ENCODE measurements at regions of chr1 and their contacts with region 1.

Region 1: DNA sequence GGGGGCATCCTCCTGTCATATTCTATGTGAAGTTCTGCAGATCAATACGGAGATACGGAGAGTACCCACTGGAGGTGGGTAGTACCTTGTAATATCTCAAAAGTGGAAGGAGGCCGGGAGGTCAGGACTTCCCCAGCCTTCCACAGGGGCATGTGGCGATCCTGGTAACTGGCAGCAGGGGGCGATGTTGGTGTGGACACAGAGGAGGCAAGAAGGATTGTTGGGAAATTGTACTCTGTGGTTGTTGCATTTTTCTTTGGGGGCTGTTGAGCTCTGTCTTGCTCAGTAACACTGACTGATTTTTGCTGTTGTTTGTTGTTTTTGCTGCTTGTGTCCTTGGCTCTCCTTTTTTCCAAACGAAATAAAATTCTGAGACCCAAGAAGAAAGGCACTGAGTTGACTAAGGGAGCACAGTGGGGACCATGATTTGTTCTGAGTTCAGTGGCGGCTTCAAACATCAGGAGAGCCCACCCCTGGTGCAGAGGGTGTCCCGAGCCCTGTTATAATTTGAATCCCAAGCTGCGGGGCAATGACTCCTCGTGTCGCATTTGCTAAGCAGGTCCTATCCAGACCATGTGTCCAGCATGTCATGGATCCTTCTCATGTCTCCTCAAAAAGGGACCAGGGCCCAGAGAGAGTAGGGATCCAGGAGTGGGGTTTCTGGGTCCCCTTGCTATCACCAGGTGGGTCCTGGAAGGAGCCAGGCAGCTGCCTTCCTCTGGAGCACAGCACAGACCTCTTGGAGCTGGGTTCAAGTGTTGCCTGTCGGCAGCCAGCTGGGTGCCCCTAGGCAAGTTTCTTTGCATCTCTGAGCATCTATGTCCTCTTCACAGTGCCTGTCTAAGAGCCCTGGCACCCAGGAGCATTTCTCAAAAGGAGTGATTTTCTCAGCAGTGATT is 22.8 kb downstream of the LHX4 start:
- DNase-seq: peak; percentile 71 to 76
- ATAC-seq: peak; percentile 49 to 84; a peak in 5 of 6 replicates
- H3K4me3 ChIP-seq: no peak overlapping the region
- H3K27ac ChIP-seq: no peak overlapping the region
- H3K4me1 ChIP-seq: no peaks in the 10 kb centered on the region
- CTCF ChIP-seq: peak; percentile 87
- EP300 ChIP-seq: no peak
- POLR2A ChIP-seq: no peak
- RAD21 ChIP-seq: peak; percentile 89 to 95

Region 2: DNA sequence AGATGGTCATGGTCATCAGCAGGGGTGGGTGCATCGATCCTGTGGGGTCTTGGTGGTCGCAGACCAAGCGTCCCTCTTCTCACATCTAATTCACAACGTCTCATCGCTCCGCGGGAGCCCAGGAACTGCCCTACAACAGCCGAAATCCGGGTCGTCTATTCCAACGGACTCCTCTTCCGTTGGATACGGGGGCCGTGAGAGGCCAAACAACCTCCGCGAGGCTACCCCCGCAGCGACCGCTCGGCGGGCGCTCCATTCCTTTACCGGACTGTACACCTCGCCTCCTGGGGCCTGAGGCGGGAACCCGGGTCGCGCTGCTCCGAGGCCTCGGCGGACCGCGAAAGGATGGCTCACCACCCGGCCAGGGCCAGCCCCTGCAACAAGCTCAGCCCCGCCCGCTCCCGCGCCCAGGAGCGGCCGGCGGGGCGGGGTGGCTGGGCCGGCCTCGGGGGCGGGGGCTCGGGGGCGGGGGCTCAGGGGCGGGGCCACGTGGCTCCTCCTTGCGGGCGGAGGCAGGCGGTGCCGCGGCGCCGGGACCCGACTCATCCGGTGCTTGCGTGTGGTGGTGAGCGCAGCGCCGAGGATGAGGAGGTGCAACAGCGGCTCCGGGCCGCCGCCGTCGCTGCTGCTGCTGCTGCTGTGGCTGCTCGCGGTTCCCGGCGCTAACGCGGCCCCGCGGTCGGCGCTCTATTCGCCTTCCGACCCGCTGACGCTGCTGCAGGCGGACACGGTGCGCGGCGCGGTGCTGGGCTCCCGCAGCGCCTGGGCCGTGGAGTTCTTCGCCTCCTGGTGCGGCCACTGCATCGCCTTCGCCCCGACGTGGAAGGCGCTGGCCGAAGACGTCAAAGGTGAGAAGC is 98.3 kb before region 1 on chr1 and contains the start of gene QSOX1:
- CTCF ChIA-PET with region 1: no interaction called
- POLR2A ChIA-PET with region 1: no interaction called
- DNase-seq: peak; percentile 86 to 91
- ATAC-seq: peak; percentile 86 to 89
- H3K4me3 ChIP-seq: peak within 1 kb of the TSS; percentile 90
- H3K27ac ChIP-seq: peak within 1 kb of the TSS; percentile 96 to 97
- H3K4me1 ChIP-seq: peaks cover 34% of the 10 kb centered on the region
- CTCF ChIP-seq: no peak
- EP300 ChIP-seq: no peak
- POLR2A ChIP-seq: peak; percentile 95
- RAD21 ChIP-seq: no peak; a peak in 1 of 5 replicates
- polyA plus RNA-seq, gene QSOX1: 60.2 and 67.3 TPM in 2 replicates

Region 3: DNA sequence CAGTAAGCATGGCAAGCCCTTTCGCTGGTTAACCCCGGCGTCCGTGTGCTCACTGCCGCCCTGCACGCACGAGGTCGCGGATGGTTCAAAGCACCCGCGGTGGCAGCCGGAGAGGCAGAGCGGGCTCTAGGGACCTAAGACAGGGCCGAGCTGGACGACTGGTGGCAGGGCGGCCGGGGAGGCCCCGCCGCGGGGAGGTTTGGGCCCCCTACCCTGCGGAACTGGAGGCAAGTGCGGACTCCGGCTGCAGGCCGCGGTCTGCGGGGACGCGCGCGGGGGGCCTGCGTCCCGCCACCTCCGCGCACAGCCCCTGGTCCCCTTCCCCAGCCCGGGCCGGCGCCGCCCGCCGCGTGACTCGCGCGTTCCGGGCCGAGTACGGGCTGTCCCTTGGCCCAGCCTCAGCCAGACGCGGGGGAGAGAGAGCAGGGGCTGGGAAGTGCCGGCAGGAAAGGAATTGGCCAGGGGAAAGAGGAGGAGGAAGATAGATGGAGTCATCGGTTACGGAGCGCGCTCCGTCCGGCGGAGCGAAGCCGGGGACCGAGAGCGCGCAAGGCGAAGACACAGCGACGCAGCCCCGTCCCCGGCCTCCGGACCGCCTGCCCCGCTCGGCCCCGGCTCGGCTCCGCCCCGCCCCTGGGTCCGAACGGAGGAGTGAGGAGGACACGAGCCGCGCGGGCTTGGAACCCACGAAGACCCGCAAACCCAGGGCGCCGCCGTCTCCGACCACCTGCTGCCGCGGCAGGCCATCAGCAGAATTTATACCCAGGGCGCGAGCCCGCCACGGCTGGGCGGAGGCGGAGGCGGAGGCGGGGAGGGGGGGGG is 23.5 kb before region 1 on chr1:
- CTCF ChIA-PET with region 1: interaction called, 23 read pairs
- POLR2A ChIA-PET with region 1: no interaction called
- DNase-seq: peak; percentile 65 to 69
- ATAC-seq: peak; percentile 54 to 57
- H3K4me3 ChIP-seq: peak overlapping the region; percentile 70
- H3K27ac ChIP-seq: peak overlapping the region; percentile 69 to 87
- H3K4me1 ChIP-seq: peaks cover 4% of the 10 kb centered on the region; the same call in 2 of the 3 replicates
- CTCF ChIP-seq: no peak
- EP300 ChIP-seq: no peak
- POLR2A ChIP-seq: peak; percentile 39
- RAD21 ChIP-seq: no peak

Region 4: DNA sequence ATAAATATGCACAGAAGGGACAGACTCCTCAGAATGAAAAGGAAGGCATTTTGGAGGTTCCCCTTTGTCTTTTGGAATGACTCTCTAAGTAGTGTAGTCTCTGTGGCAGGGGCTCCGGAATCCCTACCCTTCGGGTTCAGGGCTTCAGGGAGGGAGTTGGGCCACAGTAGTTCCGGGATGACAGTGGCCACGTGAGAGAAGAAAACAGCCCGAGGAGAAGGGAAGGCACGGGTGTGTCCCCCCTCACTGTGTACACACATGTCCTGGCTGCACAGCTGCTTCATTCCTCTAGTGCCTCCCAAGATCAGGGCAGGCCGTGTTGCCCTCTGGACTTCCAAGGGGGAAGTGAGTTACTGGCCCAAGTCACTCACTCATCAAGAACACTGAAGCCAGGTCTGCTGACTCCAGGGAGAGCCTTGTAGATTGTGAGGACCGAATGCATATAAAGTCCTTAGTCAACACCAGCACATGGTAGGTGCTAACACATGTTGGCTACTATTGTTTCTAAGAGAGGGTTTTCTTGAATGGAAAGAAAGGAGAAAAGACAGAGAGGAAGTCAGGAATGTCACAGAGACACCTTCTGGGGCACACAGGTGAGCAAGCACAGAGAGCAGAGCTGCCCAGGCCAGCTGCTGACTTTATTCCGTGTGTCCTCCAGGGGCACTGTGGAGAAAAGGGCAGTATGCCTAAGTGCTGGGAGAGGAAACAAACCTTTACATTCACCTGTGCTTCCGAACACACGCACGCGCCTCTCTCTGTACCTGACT is 17.1 kb after region 1 on chr1:
- CTCF ChIA-PET with region 1: interaction called, 32 read pairs
- POLR2A ChIA-PET with region 1: no interaction called
- DNase-seq: peak in 1 of 2 experiments; percentile 29
- ATAC-seq: peak; percentile 64 to 81; a peak in 5 of 6 replicates
- H3K4me3 ChIP-seq: no peak overlapping the region
- H3K27ac ChIP-seq: no peak overlapping the region
- H3K4me1 ChIP-seq: peaks cover 15% of the 10 kb centered on the region; the same call in 2 of the 3 replicates
- CTCF ChIP-seq: peak; percentile 32; the same call in 2 of the 3 replicates
- EP300 ChIP-seq: no peak
- POLR2A ChIP-seq: no peak
- RAD21 ChIP-seq: peak in 1 of 2 experiments; percentile 44; a peak in 2 of 5 replicates